ENCODE measurements at regions of chr17 and their contacts with region 1.

Region 1: GRCh38 chr17:44044067-44044466 is 22.4 kb downstream of the LSM12 start:
- DNase-seq: no peak
- ATAC-seq: no peak
- H3K4me3 ChIP-seq: no peak overlapping the region
- H3K27ac ChIP-seq: peak overlapping the region in 6 of 12 donors; percentile 34 to 80 (median 54)
- H3K4me1 ChIP-seq: peaks cover 3 to 47% (median 27%) of the 10 kb centered on the region in 12 donors
- H3K27me3 ChIP-seq: no peaks in the 10 kb centered on the region
- CTCF ChIP-seq: no peak
- POLR2A ChIP-seq: no peak

Region 2: DNA sequence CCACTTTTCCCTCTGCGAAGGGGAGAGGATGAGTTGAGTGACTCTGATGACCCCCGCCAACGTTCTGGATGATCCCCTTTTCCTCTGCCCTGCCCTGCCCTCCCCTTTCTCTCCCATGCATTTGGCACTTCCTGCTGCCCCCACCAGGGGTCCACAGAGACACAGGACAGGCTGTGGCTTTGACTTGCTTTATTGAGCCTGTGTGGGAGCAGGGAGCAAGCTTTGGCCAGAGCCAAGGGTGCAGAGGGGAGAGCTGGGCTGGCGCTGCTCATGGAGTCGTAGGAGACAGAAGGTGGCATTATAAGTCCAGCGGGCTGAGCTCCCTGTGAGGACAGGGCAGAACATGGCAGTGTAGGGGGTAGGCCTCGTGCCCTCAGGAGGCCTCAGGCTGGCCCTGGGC is 103.4 kb before region 1 on chr17:
- intact Hi-C with region 1: loop called (anchors 2 to 10 kb)
- DNase-seq: peak in 2 of 5 donors; percentile 38 to 61
- ATAC-seq: peak; percentile 41 to 57 (median 44)
- H3K4me3 ChIP-seq: no peak overlapping the region
- H3K27ac ChIP-seq: no peak overlapping the region
- H3K4me1 ChIP-seq: peaks cover 0 to 11% (median 3%) of the 10 kb centered on the region in 12 donors
- H3K27me3 ChIP-seq: peaks cover 0 to 21% (median 9%) of the 10 kb centered on the region in 9 donors
- CTCF ChIP-seq: peak; percentile 17 to 46 (median 30)
- POLR2A ChIP-seq: no peak

Region 3: DNA sequence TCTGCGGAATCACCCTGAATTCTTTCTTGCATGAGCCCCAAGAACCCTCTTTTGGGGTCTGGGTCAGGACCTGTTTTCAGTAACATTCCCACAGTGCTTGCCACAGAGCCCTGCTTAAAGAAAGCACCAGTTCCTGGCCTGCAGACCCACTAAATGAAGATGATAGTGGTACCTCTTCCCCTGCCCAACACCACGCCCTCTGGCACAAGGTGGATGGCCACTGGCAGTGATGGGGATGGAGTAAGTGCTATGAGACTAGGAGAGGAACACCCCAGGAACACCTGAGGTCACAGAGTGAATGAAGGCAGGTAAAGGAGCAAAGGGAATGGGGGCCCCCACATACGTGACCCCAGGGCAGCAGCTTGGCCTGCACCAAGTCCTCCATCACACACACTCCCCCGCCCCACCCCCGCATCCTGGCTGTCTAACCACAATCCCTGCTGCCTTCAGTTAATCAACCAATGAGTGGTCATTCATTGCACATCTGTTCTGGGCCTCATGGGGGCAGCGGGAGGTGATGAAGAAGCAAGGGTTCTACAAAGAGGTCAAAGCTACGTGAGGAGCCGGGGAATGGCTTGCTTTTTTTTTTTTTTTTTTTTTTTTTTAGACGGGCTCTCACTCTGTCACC is 97.9 kb before region 1 on chr17:
- intact Hi-C with region 1: loop called (anchors 2 to 10 kb)
- DNase-seq: no peak
- ATAC-seq: no peak
- H3K4me3 ChIP-seq: no peak overlapping the region
- H3K27ac ChIP-seq: no peak overlapping the region
- H3K4me1 ChIP-seq: peaks cover 0 to 3% (median 0%) of the 10 kb centered on the region in 12 donors
- H3K27me3 ChIP-seq: peaks cover 0 to 40% (median 14%) of the 10 kb centered on the region in 9 donors
- CTCF ChIP-seq: no peak
- POLR2A ChIP-seq: no peak

Region 4: DNA sequence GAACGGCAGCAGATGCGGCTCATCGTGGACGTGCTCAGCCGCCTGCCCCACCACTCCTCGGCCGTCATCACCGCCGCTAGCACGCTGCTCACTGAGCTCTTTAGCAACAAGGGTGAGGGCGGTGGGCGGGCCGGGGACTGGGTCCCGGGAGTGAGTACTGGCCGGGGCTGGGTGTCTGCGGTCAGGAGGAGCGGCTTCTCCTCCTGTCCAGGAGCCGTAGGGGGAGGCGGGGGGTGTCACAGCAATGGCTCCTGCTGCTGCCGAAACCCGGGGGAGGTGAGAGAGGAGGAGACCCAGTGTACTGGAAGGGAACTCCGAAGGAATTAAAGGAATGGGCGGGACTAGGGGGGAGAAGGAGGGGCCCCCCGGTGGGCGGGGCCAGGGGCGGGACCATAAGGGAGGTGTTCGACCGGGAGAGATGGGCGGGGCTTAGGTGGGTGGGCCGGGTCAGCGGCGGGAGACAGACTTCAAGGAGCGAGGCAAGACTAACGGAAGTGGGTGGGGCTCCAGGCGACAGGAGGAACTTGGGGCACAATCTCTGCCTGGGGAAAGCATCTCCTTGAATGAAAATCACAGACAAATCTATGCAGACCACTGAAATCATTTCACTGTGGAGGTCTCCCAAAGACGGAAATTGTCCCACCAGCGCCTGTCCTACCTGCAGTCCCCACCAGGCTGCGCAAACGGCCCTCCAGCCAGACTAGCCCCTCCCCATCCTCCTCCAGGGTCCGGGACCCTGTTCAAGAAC is 37.3 kb before region 1 on chr17:
- intact Hi-C with region 1: loop called in 2 of 10 experiments (anchors 5 kb)
- DNase-seq: peak; percentile 96 to 99 (median 98)
- ATAC-seq: peak; percentile 87 to 94 (median 92)
- H3K4me3 ChIP-seq: peak overlapping the region; percentile 44 to 79 (median 67)
- H3K27ac ChIP-seq: peak overlapping the region in 7 of 12 donors; percentile 6 to 66 (median 42)
- H3K4me1 ChIP-seq: peaks cover 8 to 52% (median 33%) of the 10 kb centered on the region in 12 donors
- H3K27me3 ChIP-seq: peaks cover 13 to 30% (median 22%) of the 10 kb centered on the region in 9 donors
- CTCF ChIP-seq: peak in 11 of 12 donors; percentile 36 to 65 (median 55)
- POLR2A ChIP-seq: peak in 1 of 2 donors; percentile 30

Region 5: DNA sequence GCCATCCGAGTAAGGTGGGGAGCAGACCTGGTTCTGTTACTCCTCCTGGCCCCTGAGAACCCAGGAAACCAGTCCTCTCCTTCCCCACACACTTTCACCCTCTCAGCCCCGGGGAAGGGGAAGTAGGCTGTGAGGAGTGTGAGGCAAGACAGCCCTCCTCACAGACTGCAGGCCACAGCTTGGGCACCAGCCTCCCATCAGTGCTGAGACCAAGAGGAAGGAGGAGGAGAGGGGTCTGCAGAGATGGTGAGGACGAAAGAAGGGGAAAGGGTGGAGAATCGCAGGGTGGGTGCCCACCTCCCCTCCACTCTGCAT is 33.5 kb after region 1 on chr17:
- intact Hi-C with region 1: no loop called
- DNase-seq: peak in 1 of 5 donors; percentile 59
- ATAC-seq: peak in 3 of 4 donors; percentile 3 to 15 (median 13)
- H3K4me3 ChIP-seq: no peak overlapping the region
- H3K27ac ChIP-seq: peak overlapping the region in 2 of 12 donors; percentile 17 to 56
- H3K4me1 ChIP-seq: peaks cover 0 to 23% (median 1%) of the 10 kb centered on the region in 12 donors
- H3K27me3 ChIP-seq: no peaks in the 10 kb centered on the region
- CTCF ChIP-seq: no peak
- POLR2A ChIP-seq: no peak